ENCODE measurements at regions of chr21 and their contacts with region 1.

Region 1: GRCh38 chr21:34967509-34968289 is 81.4 kb downstream of the RUNX1 start:
- H3K4me3 Mint-ChIP-seq: no peak overlapping the region
- H3K27ac Mint-ChIP-seq: peak overlapping the region; percentile 41
- H3K4me1 Mint-ChIP-seq: peaks cover 78% of the 10 kb centered on the region
- H3K27me3 Mint-ChIP-seq: no peaks in the 10 kb centered on the region

Region 2: DNA sequence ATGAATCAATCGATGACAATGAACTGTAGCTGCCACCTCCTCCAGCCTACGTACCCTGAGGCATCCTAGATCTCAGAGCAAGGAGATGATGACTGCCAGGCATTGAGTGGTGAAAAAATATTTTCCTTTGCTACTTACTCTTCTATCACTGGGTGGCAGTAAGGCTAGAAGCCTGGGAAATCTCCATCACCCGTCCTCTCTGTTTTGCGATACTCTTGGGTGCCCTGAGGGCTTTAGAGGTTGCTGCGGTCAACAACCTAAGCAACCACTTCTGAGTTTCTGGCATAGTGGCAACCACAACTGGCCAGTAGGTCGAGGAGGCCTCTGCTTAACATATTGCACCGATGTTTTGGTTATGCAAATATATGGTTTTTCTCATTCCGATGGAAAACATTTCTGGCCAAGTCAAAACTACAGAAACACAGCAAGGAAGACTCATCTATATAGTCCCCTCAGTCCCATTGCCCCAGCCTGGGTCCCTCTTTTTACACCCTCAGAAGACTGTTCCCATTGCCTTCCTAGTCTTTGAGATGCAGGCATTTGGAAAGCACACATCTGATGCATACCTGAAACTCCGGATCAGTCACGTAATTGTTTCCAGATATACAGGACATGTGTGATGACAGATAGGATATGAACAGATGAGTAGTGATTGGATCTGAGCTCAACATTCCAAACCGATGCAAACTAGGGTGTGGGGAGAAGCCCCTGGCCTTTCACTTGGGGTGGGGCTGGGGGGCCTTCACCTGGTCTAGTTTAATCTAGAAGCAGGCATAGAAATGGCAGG is 55.3 kb before region 1 on chr21:
- intact Hi-C with region 1: loop called (anchors 10 kb)
- H3K4me3 Mint-ChIP-seq: no peak overlapping the region
- H3K27ac Mint-ChIP-seq: no peak overlapping the region
- H3K4me1 Mint-ChIP-seq: peaks cover 93% of the 10 kb centered on the region
- H3K27me3 Mint-ChIP-seq: no peaks in the 10 kb centered on the region

Region 3: GRCh38 chr21:35026617-35027562 is 59.2 kb after region 1 on chr21:
- intact Hi-C with region 1: loop called (anchors 10 kb)
- H3K4me3 Mint-ChIP-seq: peak overlapping the region; percentile 80
- H3K27ac Mint-ChIP-seq: peak overlapping the region; percentile 88
- H3K4me1 Mint-ChIP-seq: peaks cover 67% of the 10 kb centered on the region
- H3K27me3 Mint-ChIP-seq: no peaks in the 10 kb centered on the region

Measured in dendritic cell treated with granulocyte-macrophage colony-stimulating factor and Interleukin-4, amounts not matched to agents 40 ng/mL and 50 ng/mL, for 4 days (primary cell).